Dendritic cell treated with granulocyte-macrophage colony-stimulating factor and Interleukin-4, amounts not matched to agents 40 ng/mL and 50 ng/mL, for 4 days (primary cell): ENCODE measurements at regions of chr1 and their contacts with region 1.

Region 1: DNA sequence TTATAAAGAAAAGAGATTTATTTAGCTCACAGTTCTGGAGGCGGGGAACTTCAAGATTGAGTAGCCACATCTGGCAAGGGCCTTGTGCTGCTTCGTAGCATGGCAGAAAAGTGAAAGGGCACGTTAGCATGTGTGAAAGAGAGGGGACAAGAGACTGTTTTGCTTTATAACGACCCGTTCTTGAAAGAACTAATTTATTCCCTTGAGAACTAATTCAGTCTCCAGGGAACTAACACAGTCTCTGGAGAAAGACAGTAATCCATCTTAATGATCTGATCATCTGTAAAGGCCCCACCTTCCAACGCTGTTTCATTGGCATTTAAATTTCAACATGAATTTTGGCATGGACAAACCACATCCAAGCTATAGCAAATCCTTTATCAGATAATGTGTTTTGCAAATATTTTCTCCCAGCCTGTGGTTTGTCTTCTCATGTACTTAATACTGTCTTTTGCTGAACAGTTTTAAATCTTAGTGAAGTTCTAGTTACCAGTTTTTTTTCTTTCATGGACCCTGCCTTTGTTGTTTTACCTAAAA is 26.1 kb downstream of the MTR start:
- H3K4me3 Mint-ChIP-seq: no peak overlapping the region
- H3K27ac Mint-ChIP-seq: no peak overlapping the region
- H3K4me1 Mint-ChIP-seq: no peaks in the 10 kb centered on the region
- H3K27me3 Mint-ChIP-seq: no peaks in the 10 kb centered on the region

Region 2: DNA sequence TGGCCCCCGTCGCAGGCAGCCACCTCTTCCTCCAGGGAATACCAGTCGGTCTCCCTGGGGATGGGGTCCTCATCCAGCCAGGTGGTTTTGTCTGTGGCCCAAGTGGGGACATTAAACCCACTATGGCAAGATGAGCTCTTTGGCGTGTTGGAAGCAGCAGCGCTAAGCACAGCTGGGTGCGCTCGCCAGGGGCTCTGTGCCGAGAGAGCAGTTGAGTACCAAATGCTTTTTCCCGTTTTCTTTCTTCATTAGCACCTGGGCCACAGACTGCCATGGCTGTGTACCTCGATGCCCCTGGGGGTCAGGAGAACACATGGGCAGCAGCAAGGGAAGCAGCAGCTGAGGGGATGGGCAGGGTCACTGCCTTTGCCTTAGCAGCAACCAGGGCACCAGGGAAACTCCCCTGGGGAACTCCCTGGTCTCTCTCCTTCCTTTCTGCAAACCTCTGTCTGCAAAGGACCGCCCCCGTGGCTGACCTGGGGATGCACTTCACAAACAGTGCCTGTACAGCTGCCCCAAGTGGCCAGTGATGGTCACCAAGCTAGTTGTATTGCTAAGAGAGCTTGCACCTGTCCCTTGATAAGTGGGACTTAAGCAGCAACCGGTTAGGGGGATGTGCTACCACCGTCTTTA is 396.0 kb before region 1 on chr1:
- intact Hi-C with region 1: no loop called
- H3K4me3 Mint-ChIP-seq: no peak overlapping the region
- H3K27ac Mint-ChIP-seq: no peak overlapping the region
- H3K4me1 Mint-ChIP-seq: no peaks in the 10 kb centered on the region
- H3K27me3 Mint-ChIP-seq: no peaks in the 10 kb centered on the region

Region 3: GRCh38 chr1:236581528-236581927 is 239.6 kb before region 1 on chr1:
- intact Hi-C with region 1: loop called (anchors 10 kb)
- H3K4me3 Mint-ChIP-seq: no peak overlapping the region
- H3K27ac Mint-ChIP-seq: no peak overlapping the region
- H3K4me1 Mint-ChIP-seq: no peaks in the 10 kb centered on the region
- H3K27me3 Mint-ChIP-seq: no peaks in the 10 kb centered on the region